Activated naive CD4-positive, alpha-beta T cell treated with anti-CD3 and anti-CD28 coated beads for 36 hours (primary cell): ENCODE measurements at regions of chr3 and their contacts with region 1.

Region 1: GRCh38 chr3:128322066-128323022 is 144.3 kb downstream of the DNAJB8 start:
- DNase-seq: peak; percentile 84
- H3K4me3 Mint-ChIP-seq: no peak overlapping the region
- H3K27ac Mint-ChIP-seq: no peak overlapping the region
- H3K4me1 Mint-ChIP-seq: peaks cover 51% of the 10 kb centered on the region
- H3K27me3 Mint-ChIP-seq: no peaks in the 10 kb centered on the region

Region 2: GRCh38 chr3:127915115-127915936 is 407.0 kb before region 1 on chr3 and contains the start of gene KBTBD12:
- CTCF ChIA-PET with region 1: no interaction called
- intact Hi-C with region 1: no loop called
- DNase-seq: no peak
- H3K4me3 Mint-ChIP-seq: no peak within 1 kb of the TSS
- H3K27ac Mint-ChIP-seq: no peak within 1 kb of the TSS
- H3K4me1 Mint-ChIP-seq: peaks cover 6% of the 10 kb centered on the region
- H3K27me3 Mint-ChIP-seq: peaks cover 36% of the 10 kb centered on the region
- total RNA-seq, gene KBTBD12: not detected

Region 3: DNA sequence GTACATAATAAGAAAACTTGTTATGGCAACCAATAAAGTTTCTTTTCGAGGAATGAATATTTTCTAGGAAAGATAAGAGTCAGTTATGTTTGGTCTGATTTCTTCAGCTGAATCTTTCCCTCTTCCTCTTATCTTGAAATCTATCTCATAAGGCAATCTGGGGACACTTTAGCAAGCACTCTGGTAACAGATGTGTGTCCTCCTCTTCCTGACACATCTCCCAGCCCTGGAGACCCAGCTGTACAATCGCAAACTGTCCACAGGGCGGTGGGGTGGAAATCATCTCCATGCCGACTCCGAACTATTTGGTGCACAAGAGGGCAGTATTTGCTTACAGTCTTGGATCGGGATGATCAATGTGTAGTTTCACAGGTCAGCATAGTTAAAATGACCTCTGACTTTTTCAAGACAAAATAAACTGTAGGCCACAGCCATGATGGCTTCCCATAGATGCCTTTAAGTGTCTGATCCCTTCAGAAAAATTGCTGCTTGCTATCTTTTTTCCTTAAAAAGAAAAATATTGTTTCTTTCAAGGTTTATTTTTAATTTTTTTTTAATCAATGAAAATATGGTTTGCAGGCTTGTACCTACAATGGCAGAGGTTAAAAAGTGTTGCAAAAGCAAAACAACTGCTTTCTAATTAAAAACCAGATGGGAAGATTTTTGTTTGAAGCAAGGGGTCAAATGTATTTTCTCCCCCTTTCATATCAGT is 151.4 kb before region 1 on chr3:
- CTCF ChIA-PET with region 1: interaction called, 3 read pairs
- intact Hi-C with region 1: loop called (anchors 5 kb)
- DNase-seq: peak; percentile 34
- H3K4me3 Mint-ChIP-seq: no peak overlapping the region
- H3K27ac Mint-ChIP-seq: no peak overlapping the region
- H3K4me1 Mint-ChIP-seq: peaks cover 30% of the 10 kb centered on the region
- H3K27me3 Mint-ChIP-seq: no peaks in the 10 kb centered on the region

Region 4: DNA sequence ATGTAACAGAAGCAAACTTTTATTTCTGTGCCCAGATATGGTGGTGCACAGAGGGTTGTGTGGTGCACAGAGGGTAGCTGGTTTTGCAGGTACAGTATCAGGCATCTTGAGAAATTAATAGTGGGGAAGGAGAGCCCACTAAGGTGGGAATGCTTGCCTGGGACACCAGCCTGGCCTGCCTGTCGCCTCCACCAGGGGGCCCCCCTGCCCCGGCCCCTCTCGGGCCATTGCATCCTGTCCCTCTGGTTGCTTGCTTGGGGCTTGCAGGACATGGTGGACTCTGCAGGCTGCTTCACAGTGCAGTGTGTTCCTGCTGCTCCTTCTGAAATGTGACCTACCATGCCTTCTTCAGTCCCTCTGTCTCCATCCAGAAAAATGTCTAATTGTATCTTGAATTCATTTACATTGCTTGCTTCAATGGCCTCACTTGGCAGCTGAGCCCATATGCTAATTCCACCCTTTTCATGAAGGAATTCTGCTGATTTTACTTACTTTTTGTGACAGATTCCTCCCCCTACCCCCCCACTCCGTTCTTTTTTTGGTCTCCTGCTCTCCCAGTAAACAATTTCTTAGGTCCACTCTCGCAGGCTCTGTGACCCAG is 95.4 kb before region 1 on chr3:
- CTCF ChIA-PET with region 1: interaction called, 9 read pairs
- intact Hi-C with region 1: loop called (anchors 1 kb)
- DNase-seq: peak; percentile 39
- H3K4me3 Mint-ChIP-seq: no peak overlapping the region
- H3K27ac Mint-ChIP-seq: no peak overlapping the region
- H3K4me1 Mint-ChIP-seq: peaks cover 6% of the 10 kb centered on the region
- H3K27me3 Mint-ChIP-seq: no peaks in the 10 kb centered on the region

Region 5: GRCh38 chr3:128343287-128344051 is 21.1 kb after region 1 on chr3:
- CTCF ChIA-PET with region 1: no interaction called
- intact Hi-C with region 1: no loop called
- DNase-seq: no peak
- H3K4me3 Mint-ChIP-seq: no peak overlapping the region
- H3K27ac Mint-ChIP-seq: no peak overlapping the region
- H3K4me1 Mint-ChIP-seq: peaks cover 4% of the 10 kb centered on the region
- H3K27me3 Mint-ChIP-seq: no peaks in the 10 kb centered on the region